Breast epithelium (tissue), 4 donors: ENCODE measurements at regions of chr3 and their contacts with region 1.

Region 1: DNA sequence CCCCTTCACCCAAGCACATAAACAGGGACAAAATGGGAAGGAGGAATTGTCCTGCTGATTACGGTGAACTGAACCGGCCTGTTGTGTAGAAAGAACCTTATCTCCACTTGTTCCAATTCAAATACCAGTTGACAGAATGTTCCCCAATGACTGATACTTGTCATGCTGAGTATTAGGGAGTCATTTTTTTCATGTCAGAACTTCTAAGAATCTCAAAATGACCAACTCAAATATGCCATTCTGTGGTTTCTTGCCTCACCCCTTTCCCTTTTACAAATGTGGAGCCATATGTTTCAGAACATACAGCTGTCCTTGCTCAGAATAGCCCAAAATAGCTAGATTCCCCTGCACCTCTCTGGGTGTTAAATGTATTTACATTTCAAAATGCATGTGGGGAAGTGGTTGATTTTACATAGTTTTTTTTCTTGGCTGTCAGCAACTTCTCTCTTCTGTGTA is 405.9 kb upstream of the TBL1XR1 start:
- DNase-seq: no peak
- H3K4me3 ChIP-seq: no peak overlapping the region
- H3K27ac ChIP-seq: peak overlapping the region; percentile 74 to 81
- H3K4me1 ChIP-seq: peaks cover 0 to 12% of the 10 kb centered on the region in 2 donors
- H3K27me3 ChIP-seq: no peaks in the 10 kb centered on the region
- CTCF ChIP-seq: no peak
- POLR2A ChIP-seq: no peak

Region 2: DNA sequence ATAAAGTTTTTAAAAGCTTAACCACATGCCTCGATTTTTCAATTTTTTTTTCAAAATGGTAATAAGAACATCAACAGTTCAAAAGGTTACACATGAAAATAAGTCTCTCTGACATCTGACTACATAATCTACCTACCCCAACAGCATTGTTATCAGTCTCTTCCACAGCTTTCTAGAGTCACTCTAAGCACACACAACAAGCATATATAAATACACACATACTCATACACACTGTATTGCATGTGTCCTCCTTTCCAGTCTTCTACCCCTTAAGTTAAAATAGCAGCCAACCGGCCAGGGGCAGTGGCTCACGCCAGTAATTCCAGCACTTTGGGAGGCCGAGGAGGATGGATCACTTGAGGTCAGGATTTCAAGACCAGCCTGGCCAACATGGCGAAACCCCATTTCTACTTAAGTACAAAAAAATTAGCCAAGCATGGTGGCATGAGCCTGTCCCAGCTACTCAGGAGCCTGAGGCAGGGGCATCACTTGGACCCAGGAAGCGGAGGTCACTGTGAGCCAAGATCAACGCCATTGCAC is 418.1 kb before region 1 on chr3:
- intact Hi-C with region 1: loop called (anchors 10 kb)
- DNase-seq: no peak
- H3K4me3 ChIP-seq: no peak overlapping the region
- H3K27ac ChIP-seq: no peak overlapping the region
- H3K4me1 ChIP-seq: peaks cover 0 to 3% of the 10 kb centered on the region in 2 donors
- H3K27me3 ChIP-seq: no peaks in the 10 kb centered on the region
- CTCF ChIP-seq: no peak
- POLR2A ChIP-seq: no peak

Region 3: GRCh38 chr3:177574251-177574743 is 28.9 kb before region 1 on chr3:
- intact Hi-C with region 1: no loop called
- DNase-seq: no peak
- H3K4me3 ChIP-seq: no peak overlapping the region
- H3K27ac ChIP-seq: no peak overlapping the region
- H3K4me1 ChIP-seq: no peaks in the 10 kb centered on the region
- H3K27me3 ChIP-seq: no peaks in the 10 kb centered on the region
- CTCF ChIP-seq: no peak
- POLR2A ChIP-seq: no peak

Region 4: DNA sequence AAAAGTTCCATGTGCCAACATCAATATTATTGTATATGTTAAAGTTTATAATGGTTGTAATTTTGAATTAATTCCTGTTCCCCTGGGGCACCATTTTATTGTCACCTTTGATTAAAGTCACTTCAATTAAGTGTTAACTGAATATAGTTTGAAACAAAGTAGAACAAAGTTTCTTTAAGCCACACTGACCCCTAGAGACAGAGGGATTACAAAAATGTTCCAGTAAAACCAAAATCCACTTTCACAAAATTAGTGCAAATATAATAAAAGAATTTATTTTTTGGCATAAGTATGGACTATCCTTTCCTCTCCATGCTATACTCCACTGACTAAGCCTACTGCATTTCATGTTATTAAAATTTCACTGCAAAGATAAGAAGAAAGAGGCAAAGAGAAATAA is 1344.6 kb after region 1 on chr3:
- intact Hi-C with region 1: no loop called
- DNase-seq: no peak
- H3K4me3 ChIP-seq: no peak overlapping the region
- H3K27ac ChIP-seq: no peak overlapping the region
- H3K4me1 ChIP-seq: no peaks in the 10 kb centered on the region
- H3K27me3 ChIP-seq: no peaks in the 10 kb centered on the region
- CTCF ChIP-seq: no peak
- POLR2A ChIP-seq: no peak